K562 (cell line): ENCODE measurements at regions of chr22 and their contacts with region 1.

Region 1: GRCh38 chr22:23012081-23012622 is 58.2 kb upstream of the GNAZ start:
- DNase-seq: peak in 2 of 4 experiments; percentile 40 to 46
- ATAC-seq: no peak
- H3K4me3 ChIP-seq: no peak overlapping the region
- H3K27ac ChIP-seq: no peak overlapping the region
- H3K4me1 ChIP-seq: peaks cover 0 to 5% of the 10 kb centered on the region in 2 experiments; a peak in 2 of 5 replicates
- H3K27me3 ChIP-seq: peaks cover 42 to 52% of the 10 kb centered on the region in 2 experiments
- CTCF ChIP-seq: no peak
- EP300 ChIP-seq: no peak
- POLR2A ChIP-seq: no peak
- RAD21 ChIP-seq: no peak

Region 2: GRCh38 chr22:22995166-22995565 is 17.0 kb before region 1 on chr22:
- CTCF ChIA-PET with region 1: interaction called, 3 read pairs
- POLR2A ChIA-PET with region 1: interaction called, 9 read pairs
- in situ Hi-C with region 1: no loop called
- intact Hi-C with region 1: loop called (anchors 2 kb)
- DNase-seq: peak in 3 of 4 experiments; percentile 67 to 72 (median 71)
- ATAC-seq: no peak
- H3K4me3 ChIP-seq: no peak overlapping the region
- H3K27ac ChIP-seq: no peak overlapping the region
- H3K4me1 ChIP-seq: no peaks in the 10 kb centered on the region
- H3K27me3 ChIP-seq: peaks cover 0 to 5% of the 10 kb centered on the region in 2 experiments; a peak in 1 of 5 replicates
- CTCF ChIP-seq: no peak
- EP300 ChIP-seq: no peak
- POLR2A ChIP-seq: no peak
- RAD21 ChIP-seq: no peak

Region 3: DNA sequence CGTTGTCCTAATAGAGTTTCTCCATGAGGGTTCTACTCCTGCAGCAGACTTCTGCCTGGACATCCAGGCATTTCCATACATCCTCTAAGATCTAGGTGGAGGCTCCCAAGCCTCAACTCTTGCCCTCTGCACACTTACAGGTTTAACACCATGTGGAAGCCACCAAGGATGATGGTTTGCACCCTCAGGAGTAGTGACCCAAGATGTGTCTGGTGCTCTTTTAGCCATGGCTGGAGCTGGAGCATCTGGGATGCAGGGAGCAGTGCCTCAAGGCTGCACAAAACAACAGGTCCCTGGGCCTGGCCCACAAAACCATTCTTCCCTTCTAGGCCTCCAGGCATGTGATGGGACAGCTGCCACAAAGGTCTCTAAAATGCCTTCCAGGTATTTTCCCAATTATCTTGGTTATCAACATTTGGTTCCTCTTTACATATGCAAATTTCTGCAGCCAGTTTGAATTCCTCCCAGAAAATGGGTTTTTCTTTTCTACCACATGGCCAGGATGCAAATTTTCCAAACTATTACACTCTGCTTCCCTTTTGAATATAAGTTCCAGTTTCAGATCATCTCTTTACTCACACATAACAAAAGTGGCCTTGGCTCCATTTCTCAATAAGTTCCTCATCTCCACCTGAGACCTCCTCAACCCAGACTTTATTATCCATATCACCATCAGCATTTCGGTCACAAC is 11.3 kb before region 1 on chr22:
- CTCF ChIA-PET with region 1: interaction called, 3 read pairs
- POLR2A ChIA-PET with region 1: interaction called, 10 read pairs
- in situ Hi-C with region 1: no loop called
- intact Hi-C with region 1: no loop called
- DNase-seq: no peak
- ATAC-seq: no peak
- H3K4me3 ChIP-seq: no peak overlapping the region
- H3K27ac ChIP-seq: no peak overlapping the region
- H3K4me1 ChIP-seq: no peaks in the 10 kb centered on the region
- H3K27me3 ChIP-seq: no peaks in the 10 kb centered on the region
- CTCF ChIP-seq: no peak
- EP300 ChIP-seq: no peak
- POLR2A ChIP-seq: no peak
- RAD21 ChIP-seq: no peak

Region 4: GRCh38 chr22:23023294-23023693 is 11.1 kb after region 1 on chr22:
- CTCF ChIA-PET with region 1: no interaction called
- POLR2A ChIA-PET with region 1: interaction called, 69 read pairs
- in situ Hi-C with region 1: no loop called
- intact Hi-C with region 1: no loop called
- DNase-seq: no peak
- ATAC-seq: no peak
- H3K4me3 ChIP-seq: no peak overlapping the region
- H3K27ac ChIP-seq: no peak overlapping the region
- H3K4me1 ChIP-seq: peaks cover 0 to 4% of the 10 kb centered on the region in 2 experiments; a peak in 2 of 5 replicates
- H3K27me3 ChIP-seq: peaks cover 16 to 26% of the 10 kb centered on the region in 2 experiments
- CTCF ChIP-seq: no peak
- EP300 ChIP-seq: no peak
- POLR2A ChIP-seq: no peak
- RAD21 ChIP-seq: no peak

Region 5: DNA sequence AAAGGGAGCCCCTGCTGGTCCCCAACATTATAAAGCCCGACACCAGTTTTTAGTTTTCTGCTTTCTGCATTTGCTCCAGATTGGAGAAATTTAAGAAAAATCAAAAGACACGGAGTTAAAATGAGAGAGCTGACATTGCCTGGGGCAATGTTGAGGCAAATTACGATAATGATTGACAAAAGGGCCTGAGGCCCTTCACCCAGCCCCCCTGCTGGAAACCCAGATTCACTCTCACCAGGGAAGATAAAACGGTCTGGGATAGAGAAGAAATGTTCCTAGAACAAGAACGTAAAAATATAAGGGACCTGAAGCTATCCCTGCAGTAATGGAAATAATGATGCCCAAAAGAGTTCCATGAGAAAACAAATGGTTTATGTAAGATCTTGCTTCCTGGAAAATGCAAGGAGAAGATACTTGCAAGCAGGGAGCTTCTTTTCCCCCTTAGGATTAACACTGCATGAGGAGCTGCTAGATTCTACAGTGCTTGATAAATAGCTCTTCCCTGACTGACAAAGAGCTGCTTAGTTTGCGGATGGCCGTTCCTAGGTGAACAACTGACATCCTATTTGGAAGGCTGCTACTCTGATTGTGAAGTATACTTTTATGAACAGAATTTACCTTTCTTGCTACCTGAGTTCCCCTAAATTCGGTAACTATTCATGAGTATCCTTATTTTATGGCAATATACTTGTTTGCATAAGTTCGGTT is 17.5 kb after region 1 on chr22:
- CTCF ChIA-PET with region 1: interaction called, 3 read pairs
- POLR2A ChIA-PET with region 1: interaction called, 69 read pairs
- in situ Hi-C with region 1: no loop called
- intact Hi-C with region 1: no loop called
- DNase-seq: peak in 2 of 4 experiments; percentile 44 to 59
- ATAC-seq: no peak
- H3K4me3 ChIP-seq: no peak overlapping the region
- H3K27ac ChIP-seq: no peak overlapping the region
- H3K4me1 ChIP-seq: peaks cover 0 to 4% of the 10 kb centered on the region in 2 experiments; a peak in 2 of 5 replicates
- H3K27me3 ChIP-seq: peaks cover 38 to 41% of the 10 kb centered on the region in 2 experiments
- CTCF ChIP-seq: peak in 1 of 3 experiments; percentile 32; a peak in 2 of 6 replicates
- EP300 ChIP-seq: no peak
- POLR2A ChIP-seq: no peak
- RAD21 ChIP-seq: no peak

Region 6: GRCh38 chr22:23036684-23037428 is 24.7 kb after region 1 on chr22:
- CTCF ChIA-PET with region 1: no interaction called
- POLR2A ChIA-PET with region 1: interaction called, 36 read pairs
- in situ Hi-C with region 1: no loop called
- intact Hi-C with region 1: no loop called
- DNase-seq: peak in 3 of 4 experiments; percentile 52 to 55 (median 54)
- ATAC-seq: peak; percentile 18
- H3K4me3 ChIP-seq: no peak overlapping the region
- H3K27ac ChIP-seq: no peak overlapping the region
- H3K4me1 ChIP-seq: peaks cover 2 to 5% of the 10 kb centered on the region in 2 experiments; a peak in 1 of 5 replicates
- H3K27me3 ChIP-seq: peaks cover 18 to 54% of the 10 kb centered on the region in 2 experiments; a peak in 4 of 5 replicates
- CTCF ChIP-seq: no peak
- EP300 ChIP-seq: no peak
- POLR2A ChIP-seq: no peak
- RAD21 ChIP-seq: no peak